ENCODE measurements at regions of chr17 and their contacts with region 1.

Region 1: DNA sequence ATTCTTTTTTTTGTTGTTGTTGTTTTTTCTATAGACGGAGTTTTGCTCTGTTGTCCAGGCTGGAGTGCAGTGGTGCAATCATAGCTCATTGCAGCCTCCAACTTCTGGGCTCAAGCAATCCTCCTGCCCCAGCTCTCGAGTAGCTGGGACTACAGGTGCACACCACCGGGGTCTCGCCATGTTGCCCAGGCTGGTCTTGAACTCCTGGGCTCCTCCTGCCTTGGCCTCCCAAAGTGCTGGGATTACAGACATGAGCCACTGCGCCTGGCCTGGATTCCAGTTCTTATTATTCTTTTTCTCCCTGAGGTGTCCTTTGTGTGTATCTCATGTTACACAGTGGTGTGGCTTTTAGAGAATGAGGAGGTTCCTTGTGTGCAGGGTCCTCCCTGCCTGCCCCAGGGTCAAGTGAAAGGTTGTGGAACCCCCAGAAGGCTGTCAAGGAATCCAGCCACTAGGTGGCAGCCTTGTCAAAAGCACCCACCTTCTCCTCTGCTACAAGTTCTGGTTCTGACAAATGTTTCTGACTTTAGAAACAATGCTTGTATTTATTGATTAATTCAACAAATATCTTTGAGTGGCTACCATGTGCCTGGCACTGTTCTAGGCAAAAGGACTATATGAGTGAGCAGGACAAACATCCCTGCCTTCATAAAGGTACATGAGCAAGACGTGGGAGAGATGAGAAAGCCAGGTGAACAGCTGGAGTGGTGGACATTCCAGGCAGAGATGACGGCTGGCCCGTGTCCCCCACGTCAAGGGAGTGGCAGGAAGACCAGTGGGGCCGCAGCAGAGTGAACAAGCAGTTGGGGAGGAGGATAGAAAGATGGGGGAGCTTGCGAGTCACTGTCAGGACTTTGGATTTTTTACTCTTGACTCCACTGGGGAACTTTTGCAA is 112.4 kb downstream of the SPECC1 start:
- DNase-seq: peak in 2 of 3 donors; percentile 67 to 87
- ATAC-seq: peak; percentile 78
- H3K4me3 ChIP-seq: no peak overlapping the region
- H3K4me1 ChIP-seq: peaks cover 4% of the 10 kb centered on the region
- CTCF ChIP-seq: peak; percentile 49

Region 2: GRCh38 chr17:19992803-19993713 is 128.5 kb before region 1 on chr17:
- intact Hi-C with region 1: loop called (anchors 5 to 10 kb)
- DNase-seq: peak; percentile 80 to 90 (median 83)
- ATAC-seq: peak; percentile 100
- H3K4me3 ChIP-seq: no peak overlapping the region
- H3K4me1 ChIP-seq: peaks cover 4% of the 10 kb centered on the region
- CTCF ChIP-seq: peak; percentile 58

Region 3: DNA sequence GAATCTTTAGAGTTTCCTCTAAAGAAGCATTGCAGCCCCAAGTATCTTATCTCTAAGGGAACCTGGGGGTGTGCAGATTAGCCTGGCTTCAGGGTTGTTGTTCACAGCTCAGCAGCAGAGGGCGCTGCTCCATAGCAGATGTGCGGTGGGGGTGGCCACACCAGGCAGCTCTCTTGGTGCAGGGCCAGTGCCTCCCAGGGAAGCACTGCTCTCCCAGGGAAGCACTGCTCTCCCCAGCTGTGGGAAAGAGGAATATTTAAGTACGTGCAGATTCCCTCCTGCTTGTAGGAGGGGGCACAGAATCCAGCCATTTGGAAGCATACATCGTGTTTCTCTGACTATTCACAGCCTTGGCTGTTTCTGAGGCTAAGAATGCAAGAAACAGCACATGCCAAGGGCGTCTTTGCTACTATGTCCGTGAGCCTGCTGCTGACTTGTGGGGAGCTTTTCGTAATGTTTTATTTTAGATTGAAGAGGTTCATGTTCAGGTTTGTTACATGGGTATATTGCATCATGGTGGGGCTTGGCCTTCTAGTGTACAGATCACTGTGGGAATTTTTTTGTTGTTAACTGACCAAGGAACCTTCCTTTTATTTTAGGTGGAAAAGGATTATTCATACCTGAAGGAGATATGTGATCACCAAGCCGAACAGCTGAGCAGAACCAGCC is 105.3 kb after region 1 on chr17:
- intact Hi-C with region 1: loop called in 1 of 2 experiments (anchors 5 kb)
- DNase-seq: peak; percentile 66 to 88 (median 87)
- ATAC-seq: peak; percentile 98
- H3K4me3 ChIP-seq: no peak overlapping the region
- H3K4me1 ChIP-seq: no peaks in the 10 kb centered on the region
- CTCF ChIP-seq: peak; percentile 64

Region 4: GRCh38 chr17:20315821-20316220 is 194.2 kb after region 1 on chr17:
- intact Hi-C with region 1: loop called in 1 of 2 experiments (anchors 10 kb)
- DNase-seq: no peak
- ATAC-seq: no peak
- H3K4me3 ChIP-seq: no peak overlapping the region
- H3K4me1 ChIP-seq: no peaks in the 10 kb centered on the region
- CTCF ChIP-seq: no peak

Measured in mucosa of descending colon (tissue), 3 donors.